Tibial artery (tissue), 4 donors: ENCODE measurements at regions of chr16 and their contacts with region 1.

Region 1: GRCh38 chr16:86072328-86073102 is 173.6 kb downstream of the IRF8 start:
- DNase-seq: peak in 1 of 2 donors; percentile 51
- H3K4me3 ChIP-seq: no peak overlapping the region
- H3K27ac ChIP-seq: no peak overlapping the region
- H3K4me1 ChIP-seq: no peaks in the 10 kb centered on the region
- H3K27me3 ChIP-seq: peaks cover 0 to 82% of the 10 kb centered on the region in 2 donors
- CTCF ChIP-seq: peak; percentile 56 to 76

Region 2: GRCh38 chr16:85860413-85861094 is 212.0 kb before region 1 on chr16:
- intact Hi-C with region 1: no loop called
- DNase-seq: peak in 1 of 2 donors; percentile 52
- H3K4me3 ChIP-seq: no peak overlapping the region
- H3K27ac ChIP-seq: no peak overlapping the region
- H3K4me1 ChIP-seq: no peaks in the 10 kb centered on the region
- H3K27me3 ChIP-seq: peaks cover 0 to 28% of the 10 kb centered on the region in 2 donors
- CTCF ChIP-seq: no peak

Region 3: DNA sequence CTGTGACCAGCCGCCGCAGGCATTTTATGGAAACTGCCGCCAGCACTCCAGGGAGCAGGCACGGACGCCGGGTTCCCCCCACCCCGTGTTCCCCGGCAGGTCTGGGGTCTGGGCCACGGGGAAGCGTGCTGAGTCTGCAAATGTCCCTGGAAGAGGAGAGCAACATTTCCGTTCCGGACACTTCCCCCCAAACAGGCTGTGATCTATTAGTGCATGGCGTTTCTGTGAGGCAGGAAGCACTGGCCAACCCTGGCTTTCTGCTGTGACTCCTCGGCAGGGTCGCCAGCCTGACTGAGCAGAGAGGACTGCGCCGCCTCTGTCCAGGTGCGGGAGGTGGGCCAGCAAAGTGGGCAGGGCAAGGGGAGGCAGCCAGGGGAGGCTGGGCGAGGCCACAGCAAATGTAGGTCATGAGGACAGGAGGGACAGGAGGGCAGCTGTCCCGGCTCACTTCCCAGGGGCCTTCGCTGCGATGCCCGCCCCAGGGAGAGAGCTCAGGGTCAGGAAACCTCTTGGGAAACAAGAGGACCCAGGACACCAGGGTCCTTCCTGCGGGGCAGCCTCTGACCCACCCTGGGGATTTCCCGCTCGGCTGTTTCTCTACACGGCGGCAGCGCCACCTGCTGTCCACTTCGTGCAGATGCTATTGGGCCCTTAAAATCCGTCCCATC is 447.3 kb after region 1 on chr16:
- intact Hi-C with region 1: loop called (anchors 1 kb)
- DNase-seq: peak in 1 of 2 donors; percentile 37
- H3K4me3 ChIP-seq: no peak overlapping the region
- H3K27ac ChIP-seq: no peak overlapping the region
- H3K4me1 ChIP-seq: peaks cover 0 to 20% (median 13%) of the 10 kb centered on the region in 4 donors
- H3K27me3 ChIP-seq: peaks cover 0 to 88% of the 10 kb centered on the region in 2 donors
- CTCF ChIP-seq: peak; percentile 78 to 88